Activated B cell treated with CpG ODN at 0.5 μM for 24 hours (primary cell): ENCODE measurements at regions of chr17 and their contacts with region 1.

Region 1: DNA sequence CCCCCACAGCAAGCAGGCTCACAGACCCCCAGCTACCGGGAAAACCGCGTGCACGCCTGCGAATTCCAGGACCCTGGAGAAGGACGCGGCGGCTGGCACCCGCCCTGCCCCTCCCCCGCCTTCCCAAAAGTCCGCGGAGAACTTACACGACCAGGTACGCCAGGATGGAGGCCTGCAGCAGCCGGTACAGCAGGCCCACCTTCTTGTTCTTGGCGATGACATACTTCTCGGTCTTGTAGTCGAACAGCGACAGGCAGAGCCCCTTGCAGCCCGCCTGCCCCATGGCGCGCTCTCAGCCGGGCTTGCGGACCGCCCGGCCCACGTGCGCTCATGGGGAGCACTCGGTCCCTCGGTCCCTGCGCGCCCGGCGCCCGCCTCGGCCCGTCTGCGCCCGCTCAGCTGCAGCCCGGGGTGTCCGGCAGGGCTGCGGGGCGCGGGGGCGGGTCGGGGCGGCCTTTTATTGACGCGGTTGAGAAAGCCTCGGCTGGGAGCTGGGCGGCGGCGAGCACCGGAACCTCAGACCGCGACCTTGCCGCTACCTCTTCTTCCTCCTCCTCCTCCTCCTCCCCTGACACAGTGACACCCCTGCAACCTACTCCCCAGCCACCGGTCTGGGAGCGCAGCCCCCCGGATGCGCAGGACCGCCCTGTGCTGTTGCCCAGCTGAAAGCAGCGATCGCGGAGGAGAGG is at the start of gene P2RX5:
- DNase-seq: peak; percentile 66
- ATAC-seq: peak; percentile 58
- H3K4me3 Mint-ChIP-seq: peak within 1 kb of the TSS; percentile 99
- H3K27ac Mint-ChIP-seq: peak within 1 kb of the TSS; percentile 97
- H3K4me1 Mint-ChIP-seq: peaks cover 77% of the 10 kb centered on the region
- H3K27me3 Mint-ChIP-seq: no peaks in the 10 kb centered on the region
- CTCF ChIP-seq: no peak
- total RNA-seq, gene P2RX5: 295 and 349 TPM in 2 replicates

Region 2: DNA sequence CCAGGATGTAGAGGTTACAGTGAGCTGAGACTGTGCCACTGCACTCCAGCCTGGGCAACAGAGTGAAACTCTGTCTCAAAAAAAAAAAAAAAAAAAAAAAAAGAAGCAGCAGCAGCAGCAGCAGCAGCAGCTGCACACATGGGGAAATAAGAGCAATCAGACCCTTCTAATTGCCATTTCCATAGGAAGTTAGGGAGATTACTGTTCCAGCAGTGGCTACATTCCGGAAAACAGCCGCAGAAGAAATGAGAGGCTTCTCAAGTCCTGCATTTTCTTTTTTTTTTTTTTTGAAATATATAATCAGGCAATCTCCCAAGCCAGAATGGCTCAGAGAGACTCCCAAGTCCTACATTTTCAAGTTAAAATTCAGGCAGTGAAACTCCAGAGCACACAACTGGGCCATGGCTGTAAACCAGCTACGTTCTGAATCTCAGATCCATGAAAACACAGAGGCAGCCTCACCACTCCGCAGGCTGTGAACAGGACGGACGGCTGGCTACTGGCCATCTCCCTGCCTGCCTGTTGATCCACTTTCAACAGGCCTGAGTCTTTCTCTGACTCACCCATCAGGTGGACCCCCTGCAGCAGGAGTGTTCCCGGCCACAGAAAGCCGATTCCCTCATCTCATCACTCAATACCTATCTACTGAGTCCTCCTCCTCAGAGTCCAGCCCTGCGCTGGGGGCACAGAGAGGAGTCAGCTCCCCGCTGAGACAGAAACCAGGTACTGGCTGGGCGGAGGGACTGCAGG is 101.6 kb before region 1 on chr17:
- CTCF ChIA-PET with region 1: no interaction called
- POLR2A ChIA-PET with region 1: no interaction called
- intact Hi-C with region 1: no loop called
- DNase-seq: no peak
- ATAC-seq: no peak
- H3K4me3 Mint-ChIP-seq: no peak overlapping the region
- H3K27ac Mint-ChIP-seq: no peak overlapping the region
- H3K4me1 Mint-ChIP-seq: peaks cover 4% of the 10 kb centered on the region
- H3K27me3 Mint-ChIP-seq: no peaks in the 10 kb centered on the region
- CTCF ChIP-seq: no peak

Region 3: DNA sequence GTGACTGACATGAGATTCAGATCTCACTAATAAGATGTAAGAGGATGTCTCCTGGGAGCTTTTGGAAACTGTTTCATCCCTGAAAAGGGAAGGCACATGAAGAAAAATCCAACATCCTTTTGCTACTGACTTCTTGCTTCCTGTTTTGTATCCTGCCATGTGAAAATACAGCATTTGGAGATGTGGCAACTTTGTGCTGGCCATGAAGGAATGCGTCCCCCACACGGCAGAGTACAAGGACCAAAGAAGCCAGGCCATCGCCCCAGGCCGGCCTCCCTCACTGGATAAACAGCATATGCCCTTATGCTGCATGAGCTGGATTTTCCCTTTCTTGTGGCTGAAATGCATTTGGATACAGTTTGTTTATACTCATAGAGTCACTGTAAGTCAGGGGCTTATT is 22.3 kb after region 1 on chr17:
- CTCF ChIA-PET with region 1: interaction called, 5 read pairs
- POLR2A ChIA-PET with region 1: interaction called, 315 read pairs
- intact Hi-C with region 1: loop called (anchors 1 kb)
- DNase-seq: no peak
- ATAC-seq: no peak
- H3K4me3 Mint-ChIP-seq: no peak overlapping the region
- H3K27ac Mint-ChIP-seq: no peak overlapping the region
- H3K4me1 Mint-ChIP-seq: peaks cover 65% of the 10 kb centered on the region
- H3K27me3 Mint-ChIP-seq: no peaks in the 10 kb centered on the region
- CTCF ChIP-seq: no peak

Region 4: GRCh38 chr17:3723556-3724369 is 27.9 kb after region 1 on chr17 and contains the start of gene HASPIN:
- CTCF ChIA-PET with region 1: interaction called, 10 read pairs
- POLR2A ChIA-PET with region 1: interaction called, 112 read pairs
- intact Hi-C with region 1: loop called (anchors 1 kb)
- DNase-seq: peak; percentile 91
- ATAC-seq: peak; percentile 73
- H3K4me3 Mint-ChIP-seq: peak within 1 kb of the TSS; percentile 92
- H3K27ac Mint-ChIP-seq: peak within 1 kb of the TSS; percentile 85
- H3K4me1 Mint-ChIP-seq: peaks cover 72% of the 10 kb centered on the region
- H3K27me3 Mint-ChIP-seq: no peaks in the 10 kb centered on the region
- CTCF ChIP-seq: no peak
- total RNA-seq, gene HASPIN: 6.4 and 6.7 TPM in 2 replicates

Region 5: DNA sequence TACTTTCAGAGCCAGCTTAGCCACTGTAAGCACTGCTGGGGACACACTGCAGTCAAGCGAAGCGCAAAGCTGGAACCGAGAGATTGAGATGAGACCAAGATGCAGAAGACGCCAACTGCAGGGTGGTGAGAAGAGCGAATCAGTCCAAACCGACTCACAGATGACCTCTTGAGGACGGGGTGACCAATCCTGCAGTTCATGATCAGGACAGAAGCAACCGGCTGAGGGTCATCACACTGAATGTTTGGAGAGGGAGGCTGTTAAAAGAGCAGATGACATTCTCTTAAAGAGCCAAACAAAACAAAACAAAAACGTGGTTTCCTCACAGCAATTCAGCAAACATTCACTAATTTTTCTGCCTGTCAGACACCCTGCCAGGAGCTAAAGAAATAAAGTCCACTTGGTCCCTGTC is 36.3 kb after region 1 on chr17:
- CTCF ChIA-PET with region 1: interaction called, 22 read pairs
- POLR2A ChIA-PET with region 1: interaction called, 52 read pairs
- intact Hi-C with region 1: no loop called
- DNase-seq: no peak
- ATAC-seq: peak; percentile 91
- H3K4me3 Mint-ChIP-seq: no peak overlapping the region
- H3K27ac Mint-ChIP-seq: peak overlapping the region; percentile 27
- H3K4me1 Mint-ChIP-seq: peaks cover 40% of the 10 kb centered on the region
- H3K27me3 Mint-ChIP-seq: no peaks in the 10 kb centered on the region
- CTCF ChIP-seq: no peak